Activated CD4-positive, alpha-beta T cell treated with anti-CD3 and anti-CD28 coated beads, Interleukin-2, amount 10 ng/mL, durations not matched to agents 24 days and 14 days (primary cell): ENCODE measurements at regions of chr6 and their contacts with region 1.

Region 1: GRCh38 chr6:137707590-137708360 is 159.3 kb upstream of the TNFAIP3 start:
- DNase-seq: peak; percentile 96
- H3K4me3 Mint-ChIP-seq: peak overlapping the region; percentile 80
- H3K27ac Mint-ChIP-seq: peak overlapping the region; percentile 98
- H3K4me1 Mint-ChIP-seq: peaks cover 74% of the 10 kb centered on the region
- H3K27me3 Mint-ChIP-seq: peaks cover 1% of the 10 kb centered on the region

Region 2: DNA sequence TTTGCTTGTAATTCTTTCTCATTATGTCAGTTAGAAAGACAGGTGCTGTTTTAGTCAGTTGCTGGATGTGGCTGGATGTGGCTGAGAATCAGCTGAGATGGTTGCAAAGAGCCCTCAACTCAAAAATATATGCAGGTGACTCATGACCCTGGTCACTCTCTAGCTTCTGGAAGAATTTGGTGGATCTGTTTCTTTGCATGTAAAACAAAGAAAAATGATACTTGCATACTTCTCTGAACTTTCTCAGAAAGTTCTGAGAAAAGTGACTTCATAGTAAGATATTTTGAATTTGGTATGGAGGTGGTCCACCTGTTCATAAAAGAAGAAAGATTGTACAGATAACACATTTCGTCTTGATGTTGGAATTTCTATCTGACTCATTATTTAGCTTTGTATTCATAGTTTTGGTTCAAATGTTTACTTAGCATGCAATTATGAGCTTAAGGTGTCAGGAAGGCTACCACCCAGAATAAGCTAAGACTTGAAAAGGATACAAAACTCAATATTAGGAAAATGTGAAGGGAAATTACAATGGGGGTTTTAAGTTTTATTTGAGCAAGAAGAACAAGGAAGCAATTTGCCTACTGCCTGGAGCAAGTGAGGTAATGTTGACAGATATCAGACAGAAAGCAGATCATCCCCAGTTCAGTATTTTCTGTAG is 50.3 kb before region 1 on chr6:
- intact Hi-C with region 1: loop called (anchors 2 kb)
- DNase-seq: peak; percentile 79
- H3K4me3 Mint-ChIP-seq: peak overlapping the region; percentile 4
- H3K27ac Mint-ChIP-seq: peak overlapping the region; percentile 45
- H3K4me1 Mint-ChIP-seq: peaks cover 29% of the 10 kb centered on the region
- H3K27me3 Mint-ChIP-seq: no peaks in the 10 kb centered on the region

Region 3: DNA sequence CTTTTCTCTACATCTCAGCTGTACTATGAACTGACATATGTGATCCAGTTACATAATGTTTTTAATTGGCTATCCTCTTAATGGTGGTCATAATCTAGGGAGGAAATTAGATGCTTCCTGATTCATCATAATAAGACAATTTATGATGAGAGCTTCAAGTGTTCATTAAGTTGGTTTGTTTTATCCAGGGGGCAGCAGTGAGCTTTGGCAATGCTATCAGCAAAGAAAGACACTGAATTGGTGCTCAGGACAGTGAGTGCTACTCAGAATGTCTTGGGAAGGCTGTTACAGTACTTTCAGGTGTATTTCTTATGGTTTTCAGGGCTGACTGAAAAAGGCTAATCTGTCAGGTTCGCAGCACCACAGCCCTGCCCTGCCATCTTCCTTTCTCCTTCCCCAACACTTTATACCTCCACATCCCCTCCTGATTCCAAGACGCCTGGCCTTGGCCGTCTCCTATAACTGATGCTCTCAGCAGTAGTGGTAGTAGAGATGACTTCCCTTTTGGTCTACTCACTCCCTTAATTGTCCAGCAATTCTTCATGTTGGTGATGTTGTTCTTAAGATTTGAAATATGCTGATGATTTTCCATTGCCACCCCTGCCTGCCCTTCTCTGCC is 92.3 kb after region 1 on chr6:
- intact Hi-C with region 1: loop called (anchors 2 kb)
- DNase-seq: peak; percentile 83
- H3K4me3 Mint-ChIP-seq: peak overlapping the region; percentile 18
- H3K27ac Mint-ChIP-seq: peak overlapping the region; percentile 81
- H3K4me1 Mint-ChIP-seq: peaks cover 54% of the 10 kb centered on the region
- H3K27me3 Mint-ChIP-seq: no peaks in the 10 kb centered on the region

Region 4: GRCh38 chr6:137873273-137873762 is 165.5 kb after region 1 on chr6:
- intact Hi-C with region 1: loop called (anchors 1 kb)
- DNase-seq: peak; percentile 89
- H3K4me3 Mint-ChIP-seq: peak overlapping the region; percentile 87
- H3K27ac Mint-ChIP-seq: peak overlapping the region; percentile 86
- H3K4me1 Mint-ChIP-seq: peaks cover 44% of the 10 kb centered on the region
- H3K27me3 Mint-ChIP-seq: no peaks in the 10 kb centered on the region

Region 5: DNA sequence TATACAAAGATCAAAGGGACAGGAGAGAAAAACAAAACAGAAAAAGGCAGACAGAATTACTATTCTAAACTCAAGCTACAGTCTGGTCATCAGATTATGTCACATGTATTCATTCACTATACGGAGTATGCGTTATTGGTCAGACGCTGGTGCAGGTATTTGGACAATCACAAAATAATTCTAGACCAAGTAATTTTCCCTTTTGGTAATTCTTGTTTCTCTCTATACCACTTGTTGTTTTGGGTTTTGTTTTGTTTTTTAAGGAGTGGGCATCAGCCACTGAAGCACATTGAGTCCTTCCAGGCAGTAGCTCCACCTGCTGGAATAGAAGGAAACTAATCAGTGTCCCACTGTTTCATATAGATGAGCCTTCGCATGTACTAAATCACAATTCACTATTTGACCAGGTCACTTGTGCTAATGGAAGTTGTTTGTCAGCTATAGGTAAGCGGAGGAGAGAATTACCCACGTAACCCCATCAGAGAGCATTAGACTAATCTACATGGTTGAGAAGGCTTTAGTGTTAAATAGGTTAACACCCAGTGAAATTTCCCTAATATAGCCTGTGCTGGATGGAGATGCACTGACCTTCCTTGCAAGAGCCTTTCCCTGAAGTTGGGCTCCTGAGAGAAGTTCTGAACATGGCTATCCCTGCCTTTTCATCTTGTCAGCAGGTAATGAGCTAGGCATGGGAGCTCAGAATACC is 237.2 kb after region 1 on chr6:
- intact Hi-C with region 1: loop called (anchors 1 kb)
- DNase-seq: peak; percentile 77
- H3K4me3 Mint-ChIP-seq: peak overlapping the region; percentile 23
- H3K27ac Mint-ChIP-seq: peak overlapping the region; percentile 81
- H3K4me1 Mint-ChIP-seq: peaks cover 57% of the 10 kb centered on the region
- H3K27me3 Mint-ChIP-seq: no peaks in the 10 kb centered on the region

Region 6: DNA sequence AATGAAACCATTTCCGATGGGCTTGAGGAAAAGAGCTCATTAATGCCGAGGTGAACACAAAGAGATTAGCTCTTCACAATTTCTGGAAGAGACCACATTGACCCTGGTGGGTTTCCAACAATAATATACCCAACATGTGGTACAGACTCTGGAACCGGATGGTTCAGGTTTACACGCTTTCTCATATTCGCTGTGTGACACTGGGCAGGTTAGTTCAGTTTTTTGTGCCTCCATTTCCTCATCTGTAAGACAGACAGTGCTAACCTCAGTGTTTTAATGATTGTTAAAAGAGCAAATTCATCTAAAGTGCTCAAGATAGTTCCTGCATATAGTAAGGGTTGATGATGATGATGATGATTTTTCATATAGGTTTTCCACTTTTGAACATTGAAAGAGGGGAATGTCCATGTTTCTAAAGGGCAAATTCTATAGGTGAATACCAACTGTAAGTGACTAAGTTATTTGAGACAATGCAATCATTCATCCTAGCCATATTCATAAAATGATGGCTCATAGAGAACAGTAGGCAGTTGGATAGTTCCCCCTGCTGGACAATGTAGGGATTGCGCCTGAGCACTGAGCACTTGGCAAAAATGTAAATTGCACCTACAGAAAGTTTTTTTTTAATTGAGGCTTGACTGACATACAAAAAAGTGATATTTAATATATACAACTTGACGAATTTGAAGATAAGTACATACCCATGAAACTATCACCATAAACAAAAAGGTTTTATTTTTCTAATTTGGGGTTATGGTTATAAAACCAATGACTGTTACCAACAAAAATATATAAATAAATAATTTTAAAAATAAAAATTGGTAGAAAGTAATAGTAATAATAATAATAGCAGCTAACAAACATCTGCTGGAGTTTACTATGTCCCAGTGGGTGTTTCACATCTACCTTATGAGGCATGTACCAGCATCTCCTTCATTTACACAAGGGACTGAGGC is 401.5 kb after region 1 on chr6:
- intact Hi-C with region 1: loop called (anchors 1 kb)
- DNase-seq: peak; percentile 93
- H3K4me3 Mint-ChIP-seq: no peak overlapping the region
- H3K27ac Mint-ChIP-seq: no peak overlapping the region
- H3K4me1 Mint-ChIP-seq: peaks cover 22% of the 10 kb centered on the region
- H3K27me3 Mint-ChIP-seq: peaks cover 45% of the 10 kb centered on the region